A549 (cell line): ENCODE measurements at regions of chr9 and their contacts with region 1.

Region 1: GRCh38 chr9:87336914-87337333 is 160.7 kb upstream of the DAPK1 start:
- DNase-seq: peak; percentile 44 to 88
- ATAC-seq: peak; percentile 73 to 90
- H3K4me3 ChIP-seq: peak overlapping the region; percentile 48
- H3K27ac ChIP-seq: peak overlapping the region; percentile 73 to 85
- H3K4me1 ChIP-seq: peaks cover 17% of the 10 kb centered on the region
- CTCF ChIP-seq: peak; percentile 92
- EP300 ChIP-seq: no peak
- POLR2A ChIP-seq: no peak
- RAD21 ChIP-seq: peak; percentile 98

Region 2: GRCh38 chr9:86486891-86487837 is 849.8 kb before region 1 on chr9:
- CTCF ChIA-PET with region 1: interaction called, 21 read pairs
- POLR2A ChIA-PET with region 1: no interaction called
- DNase-seq: peak; percentile 44 to 55
- ATAC-seq: peak; percentile 79 to 80
- H3K4me3 ChIP-seq: no peak overlapping the region
- H3K27ac ChIP-seq: no peak overlapping the region
- H3K4me1 ChIP-seq: no peaks in the 10 kb centered on the region
- CTCF ChIP-seq: peak; percentile 66
- EP300 ChIP-seq: no peak
- POLR2A ChIP-seq: no peak
- RAD21 ChIP-seq: peak; percentile 76 to 80